Activated CD4-positive, alpha-beta memory T cell treated with anti-CD3 and anti-CD28 coated beads for 36 hours (primary cell): ENCODE measurements at regions of chr18 and their contacts with region 1.

Region 1: GRCh38 chr18:12947355-12948041 is at the start of gene SEH1L:
- DNase-seq: peak; percentile 100
- H3K4me3 Mint-ChIP-seq: peak within 1 kb of the TSS; percentile 95
- H3K27ac Mint-ChIP-seq: peak within 1 kb of the TSS; percentile 97
- H3K4me1 Mint-ChIP-seq: peaks cover 45% of the 10 kb centered on the region
- H3K27me3 Mint-ChIP-seq: no peaks in the 10 kb centered on the region
- total RNA-seq, gene SEH1L: 90.3 to 92.5 TPM

Region 2: GRCh38 chr18:12702221-12703095 is 245.0 kb before region 1 on chr18 and contains the starts of genes CEP76 and PSMG2:
- CTCF ChIA-PET with region 1: no interaction called
- POLR2A ChIA-PET with region 1: interaction called, 3 read pairs
- intact Hi-C with region 1: loop called (anchors 1 kb)
- DNase-seq: peak; percentile 88
- H3K4me3 Mint-ChIP-seq: peak within 1 kb of the TSS; percentile 96
- H3K27ac Mint-ChIP-seq: peak within 1 kb of the TSS; percentile 98
- H3K4me1 Mint-ChIP-seq: peaks cover 35% of the 10 kb centered on the region
- H3K27me3 Mint-ChIP-seq: no peaks in the 10 kb centered on the region
- total RNA-seq, gene CEP76: 14.4 to 15.0 TPM
- total RNA-seq, gene PSMG2: 112 to 119 TPM

Region 3: GRCh38 chr18:12928641-12929040 is 18.9 kb before region 1 on chr18:
- CTCF ChIA-PET with region 1: no interaction called
- POLR2A ChIA-PET with region 1: no interaction called
- intact Hi-C with region 1: no loop called
- DNase-seq: no peak
- H3K4me3 Mint-ChIP-seq: no peak overlapping the region
- H3K27ac Mint-ChIP-seq: no peak overlapping the region
- H3K4me1 Mint-ChIP-seq: no peaks in the 10 kb centered on the region
- H3K27me3 Mint-ChIP-seq: no peaks in the 10 kb centered on the region

Region 4: GRCh38 chr18:13137670-13138419 is 190.3 kb after region 1 on chr18:
- CTCF ChIA-PET with region 1: no interaction called
- POLR2A ChIA-PET with region 1: no interaction called
- intact Hi-C with region 1: loop called (anchors 1 kb)
- DNase-seq: peak; percentile 81
- H3K4me3 Mint-ChIP-seq: peak overlapping the region; percentile 88
- H3K27ac Mint-ChIP-seq: peak overlapping the region; percentile 69
- H3K4me1 Mint-ChIP-seq: peaks cover 26% of the 10 kb centered on the region
- H3K27me3 Mint-ChIP-seq: no peaks in the 10 kb centered on the region